PC-9 (cell line): ENCODE measurements at regions of chr3 and their contacts with region 1.

Region 1: GRCh38 chr3:14402304-14402811 is at the start of gene SLC6A6:
- DNase-seq: peak; percentile 82 to 97
- H3K4me3 ChIP-seq: peak within 1 kb of the TSS; percentile 88
- H3K27ac ChIP-seq: peak within 1 kb of the TSS; percentile 99
- H3K4me1 ChIP-seq: peaks cover 39% of the 10 kb centered on the region
- H3K27me3 ChIP-seq: no peaks in the 10 kb centered on the region
- CTCF ChIP-seq: peak; percentile 57
- total RNA-seq, gene SLC6A6: 84.9 and 122 TPM in 2 replicates

Region 2: GRCh38 chr3:14016885-14017475 is 385.4 kb before region 1 on chr3:
- CTCF ChIA-PET with region 1: no interaction called
- POLR2A ChIA-PET with region 1: no interaction called
- intact Hi-C with region 1: loop called (anchors 5 kb)
- DNase-seq: peak; percentile 79 to 88
- H3K4me3 ChIP-seq: no peak overlapping the region
- H3K27ac ChIP-seq: 0 out of 2 replicates have a peak overlapping the region, but pooled peaks have one; percentile 24
- H3K4me1 ChIP-seq: peaks cover 7% of the 10 kb centered on the region; the same call in 1 of the 2 replicates
- H3K27me3 ChIP-seq: no peaks in the 10 kb centered on the region; the same call in 1 of the 2 replicates
- CTCF ChIP-seq: no peak

Region 3: GRCh38 chr3:14319654-14320182 is 82.6 kb before region 1 on chr3:
- CTCF ChIA-PET with region 1: no interaction called
- POLR2A ChIA-PET with region 1: interaction called, 3 read pairs
- intact Hi-C with region 1: loop called (anchors 5 kb)
- DNase-seq: peak; percentile 63 to 75
- H3K4me3 ChIP-seq: peak overlapping the region; percentile 55
- H3K27ac ChIP-seq: peak overlapping the region; percentile 35; the same call in 1 of the 2 replicates
- H3K4me1 ChIP-seq: peaks cover 62% of the 10 kb centered on the region
- H3K27me3 ChIP-seq: no peaks in the 10 kb centered on the region
- CTCF ChIP-seq: no peak

Region 4: DNA sequence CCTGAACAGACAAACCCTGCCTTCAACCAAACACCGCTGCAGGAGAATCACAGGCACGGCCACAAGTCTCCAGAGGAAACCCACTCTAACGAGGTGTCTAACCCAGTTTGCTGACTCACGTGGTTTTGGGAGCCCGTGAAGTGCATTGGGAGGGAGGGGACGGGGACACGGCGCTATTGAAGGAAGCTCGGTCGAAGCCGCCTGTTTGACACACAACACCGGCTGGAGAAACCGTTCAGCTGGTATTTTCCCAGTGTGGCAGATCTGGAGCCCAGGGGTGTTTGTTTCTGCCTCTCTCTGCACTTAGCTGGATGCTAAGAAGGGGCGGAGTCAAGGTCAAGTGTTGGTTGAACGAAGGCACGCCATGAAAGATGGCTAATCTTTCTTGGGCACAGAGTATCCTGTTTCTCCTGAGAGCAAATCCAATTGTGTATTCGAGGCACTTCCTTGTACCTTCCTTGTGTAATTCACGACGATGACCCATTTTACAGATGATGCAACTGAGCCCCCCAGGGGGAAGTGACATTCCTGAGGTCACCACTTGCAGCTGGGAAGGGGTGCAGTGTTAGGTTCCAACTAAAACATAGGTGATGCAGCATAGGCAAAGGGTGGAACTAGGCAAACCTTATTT is 22.5 kb after region 1 on chr3:
- CTCF ChIA-PET with region 1: no interaction called
- POLR2A ChIA-PET with region 1: interaction called, 13 read pairs
- intact Hi-C with region 1: no loop called
- DNase-seq: peak in 1 of 2 experiments; percentile 87
- H3K4me3 ChIP-seq: peak overlapping the region; percentile 20; the same call in 1 of the 2 replicates
- H3K27ac ChIP-seq: peak overlapping the region; percentile 91
- H3K4me1 ChIP-seq: peaks cover 96% of the 10 kb centered on the region
- H3K27me3 ChIP-seq: no peaks in the 10 kb centered on the region
- CTCF ChIP-seq: no peak

Region 5: GRCh38 chr3:14452679-14453367 is 50.5 kb after region 1 on chr3:
- CTCF ChIA-PET with region 1: no interaction called
- POLR2A ChIA-PET with region 1: interaction called, 3 read pairs
- intact Hi-C with region 1: loop called (anchors 5 kb)
- DNase-seq: peak; percentile 71 to 85
- H3K4me3 ChIP-seq: no peak overlapping the region
- H3K27ac ChIP-seq: peak overlapping the region; percentile 72
- H3K4me1 ChIP-seq: peaks cover 29% of the 10 kb centered on the region
- H3K27me3 ChIP-seq: no peaks in the 10 kb centered on the region
- CTCF ChIP-seq: 0 out of 2 replicates have a peak, but pooled peaks have one; percentile 13